Activated CD4-positive, alpha-beta memory T cell treated with anti-CD3 and anti-CD28 coated beads, Interleukin-2, amount 10 ng/mL, durations not matched to agents 7 days and 5 days (primary cell): ENCODE measurements at regions of chr22 and their contacts with region 1.

Region 1: DNA sequence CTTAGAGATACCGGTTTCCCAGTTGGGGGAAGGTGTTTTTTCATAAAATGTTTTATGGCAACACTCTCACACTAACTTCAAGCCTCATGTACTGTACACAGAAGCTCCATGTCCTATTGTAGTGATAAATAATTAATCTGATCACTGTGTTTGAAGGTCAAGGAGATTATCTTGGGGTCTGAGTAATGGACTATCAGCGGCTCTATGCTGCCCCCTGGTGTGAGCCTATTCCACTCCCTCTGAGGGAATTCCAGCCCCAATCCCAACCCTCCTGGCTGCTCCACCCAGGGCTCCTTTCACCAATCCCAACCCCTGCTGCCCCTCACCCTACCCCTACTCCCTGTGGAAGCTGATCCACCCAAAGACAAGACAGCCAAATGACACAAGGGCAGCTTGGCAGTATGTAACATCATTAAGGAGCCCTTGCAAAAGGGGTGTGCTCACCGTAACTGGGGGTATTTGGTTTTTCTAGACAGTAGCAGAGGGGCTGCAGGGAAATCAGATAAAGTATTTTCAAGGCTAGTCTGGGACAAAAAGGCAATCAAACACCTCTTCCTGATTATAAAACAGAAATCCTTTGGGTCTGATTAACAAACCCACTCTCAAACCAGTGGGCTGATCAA is 22.3 kb downstream of the HPS4 start:
- DNase-seq: peak; percentile 32
- H3K4me3 Mint-ChIP-seq: no peak overlapping the region
- H3K27ac Mint-ChIP-seq: no peak overlapping the region
- H3K4me1 Mint-ChIP-seq: no peaks in the 10 kb centered on the region
- H3K27me3 Mint-ChIP-seq: no peaks in the 10 kb centered on the region

Region 2: GRCh38 chr22:26364066-26365015 is 97.0 kb before region 1 on chr22:
- CTCF ChIA-PET with region 1: interaction called, 79 read pairs
- POLR2A ChIA-PET with region 1: no interaction called
- DNase-seq: peak; percentile 63
- H3K4me3 Mint-ChIP-seq: no peak overlapping the region
- H3K27ac Mint-ChIP-seq: no peak overlapping the region
- H3K4me1 Mint-ChIP-seq: peaks cover 6% of the 10 kb centered on the region
- H3K27me3 Mint-ChIP-seq: peaks cover 22% of the 10 kb centered on the region

Region 3: GRCh38 chr22:26398741-26399153 is 62.6 kb before region 1 on chr22:
- CTCF ChIA-PET with region 1: interaction called, 13 read pairs
- POLR2A ChIA-PET with region 1: no interaction called
- DNase-seq: peak; percentile 69
- H3K4me3 Mint-ChIP-seq: no peak overlapping the region
- H3K27ac Mint-ChIP-seq: no peak overlapping the region
- H3K4me1 Mint-ChIP-seq: peaks cover 6% of the 10 kb centered on the region
- H3K27me3 Mint-ChIP-seq: peaks cover 1% of the 10 kb centered on the region

Region 4: GRCh38 chr22:26428515-26429457 is 32.5 kb before region 1 on chr22 and contains the start of gene ASPHD2:
- CTCF ChIA-PET with region 1: interaction called, 11 read pairs
- POLR2A ChIA-PET with region 1: interaction called, 6 read pairs
- DNase-seq: peak; percentile 82
- H3K4me3 Mint-ChIP-seq: peak within 1 kb of the TSS; percentile 93
- H3K27ac Mint-ChIP-seq: peak within 1 kb of the TSS; percentile 97
- H3K4me1 Mint-ChIP-seq: peaks cover 50% of the 10 kb centered on the region
- H3K27me3 Mint-ChIP-seq: peaks cover 10% of the 10 kb centered on the region
- total RNA-seq, gene ASPHD2: 11.8 to 12.7 TPM

Region 5: DNA sequence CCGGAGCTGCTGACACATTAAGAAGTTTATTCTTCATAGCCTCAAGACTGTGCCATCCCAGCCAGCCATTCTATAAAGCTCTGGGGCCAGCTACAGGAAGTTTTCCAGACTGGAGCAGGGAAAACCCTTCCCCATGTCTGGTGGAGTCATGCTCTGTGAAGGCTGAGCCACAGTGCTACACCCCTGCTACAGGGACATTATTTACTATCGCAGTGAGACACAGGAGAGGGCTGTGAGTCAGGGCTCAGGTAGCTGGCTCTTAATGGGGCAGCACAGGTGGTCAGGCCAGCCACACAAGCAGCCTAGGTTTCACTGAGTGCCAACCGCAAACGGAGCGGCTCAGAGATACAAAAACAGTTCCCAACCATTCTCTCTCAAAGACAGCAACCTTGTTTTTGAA is 10.2 kb after region 1 on chr22:
- CTCF ChIA-PET with region 1: interaction called, 20 read pairs
- POLR2A ChIA-PET with region 1: interaction called, 4 read pairs
- DNase-seq: no peak
- H3K4me3 Mint-ChIP-seq: no peak overlapping the region
- H3K27ac Mint-ChIP-seq: no peak overlapping the region
- H3K4me1 Mint-ChIP-seq: peaks cover 14% of the 10 kb centered on the region
- H3K27me3 Mint-ChIP-seq: no peaks in the 10 kb centered on the region

Region 6: GRCh38 chr22:26542831-26543230 is 81.5 kb after region 1 on chr22:
- CTCF ChIA-PET with region 1: no interaction called
- POLR2A ChIA-PET with region 1: no interaction called
- DNase-seq: peak; percentile 56
- H3K4me3 Mint-ChIP-seq: no peak overlapping the region
- H3K27ac Mint-ChIP-seq: peak overlapping the region; percentile 63
- H3K4me1 Mint-ChIP-seq: peaks cover 55% of the 10 kb centered on the region
- H3K27me3 Mint-ChIP-seq: no peaks in the 10 kb centered on the region